CD8-positive, alpha-beta memory T cell (primary cell): ENCODE measurements at regions of chr20 and their contacts with region 1.

Region 1: GRCh38 chr20:17504898-17505635 is 26.1 kb downstream of the BFSP1 start:
- DNase-seq: peak; percentile 15 to 67 (median 54)
- H3K4me3 ChIP-seq: peak overlapping the region; percentile 59
- H3K4me3 Mint-ChIP-seq: peak overlapping the region; percentile 86 to 95 (median 92)
- H3K27ac ChIP-seq: peak overlapping the region; percentile 38
- H3K27ac Mint-ChIP-seq: peak overlapping the region; percentile 90 to 99 (median 95)
- H3K4me1 ChIP-seq: peaks cover 31% of the 10 kb centered on the region
- H3K4me1 Mint-ChIP-seq: peaks cover 41 to 43% (median 42%) of the 10 kb centered on the region in 3 donors
- H3K27me3 ChIP-seq: no peaks in the 10 kb centered on the region
- H3K27me3 Mint-ChIP-seq: peaks cover 0 to 6% of the 10 kb centered on the region in 2 donors

Region 2: DNA sequence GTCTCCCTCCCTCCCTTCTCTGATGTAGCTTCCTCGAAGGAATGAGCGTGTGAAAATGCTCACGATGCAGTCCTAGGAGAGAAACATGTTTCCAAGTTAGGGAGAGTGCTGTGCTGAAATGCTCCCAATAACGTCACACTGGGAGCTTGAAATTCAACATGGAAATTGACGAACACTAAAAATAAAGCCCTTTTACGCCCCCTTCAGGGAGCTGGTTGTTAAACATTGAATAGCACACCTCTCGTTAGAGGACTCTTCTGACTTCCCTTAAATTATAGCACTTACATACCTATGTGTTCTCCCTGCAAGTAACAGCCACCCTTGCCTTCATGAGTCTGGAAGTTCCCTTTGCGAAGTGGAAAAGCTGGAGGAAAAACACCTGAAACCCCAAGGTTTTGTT is 62.5 kb before region 1 on chr20:
- CTCF ChIA-PET with region 1: no interaction called
- POLR2A ChIA-PET with region 1: no interaction called
- DNase-seq: no peak
- H3K4me3 ChIP-seq: no peak overlapping the region
- H3K4me3 Mint-ChIP-seq: no peak overlapping the region
- H3K27ac ChIP-seq: no peak overlapping the region
- H3K27ac Mint-ChIP-seq: no peak overlapping the region
- H3K4me1 ChIP-seq: no peaks in the 10 kb centered on the region
- H3K4me1 Mint-ChIP-seq: no peaks in the 10 kb centered on the region
- H3K27me3 ChIP-seq: no peaks in the 10 kb centered on the region
- H3K27me3 Mint-ChIP-seq: peaks cover 20 to 29% of the 10 kb centered on the region in 2 donors

Region 3: DNA sequence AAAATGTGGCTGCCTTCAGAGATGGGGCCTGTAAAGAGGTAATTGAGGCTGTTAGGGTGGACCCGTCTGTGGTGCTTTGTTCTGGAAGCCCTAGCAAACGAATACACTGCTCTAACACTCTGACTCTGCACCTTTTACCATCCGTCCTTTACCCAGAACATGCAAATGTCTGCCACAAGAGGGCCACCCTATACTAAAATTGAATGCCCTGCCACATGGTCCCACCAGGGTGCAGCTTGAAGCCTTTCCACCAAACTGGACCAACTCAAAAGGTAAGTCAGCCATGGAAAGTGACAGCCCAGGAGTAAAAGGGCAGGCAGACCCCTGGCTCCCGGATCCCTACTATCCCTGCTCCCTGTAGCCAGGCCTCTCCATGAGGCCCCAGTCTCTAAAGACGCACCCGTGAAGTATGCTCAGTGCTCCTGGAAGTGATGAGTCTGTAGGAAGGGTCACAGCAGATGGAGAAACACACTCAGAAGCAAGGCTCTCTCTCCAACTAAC is 31.9 kb after region 1 on chr20:
- CTCF ChIA-PET with region 1: interaction called, 11 read pairs
- POLR2A ChIA-PET with region 1: interaction called, 3 read pairs
- DNase-seq: peak; percentile 43 to 75 (median 60)
- H3K4me3 ChIP-seq: no peak overlapping the region
- H3K4me3 Mint-ChIP-seq: no peak overlapping the region
- H3K27ac ChIP-seq: no peak overlapping the region
- H3K27ac Mint-ChIP-seq: peak overlapping the region in 2 of 8 donors; percentile 24 to 73
- H3K4me1 ChIP-seq: peaks cover 7% of the 10 kb centered on the region
- H3K4me1 Mint-ChIP-seq: peaks cover 6 to 13% (median 6%) of the 10 kb centered on the region in 3 donors
- H3K27me3 ChIP-seq: peaks cover 8% of the 10 kb centered on the region
- H3K27me3 Mint-ChIP-seq: peaks cover 15 to 37% of the 10 kb centered on the region in 2 donors

Region 4: DNA sequence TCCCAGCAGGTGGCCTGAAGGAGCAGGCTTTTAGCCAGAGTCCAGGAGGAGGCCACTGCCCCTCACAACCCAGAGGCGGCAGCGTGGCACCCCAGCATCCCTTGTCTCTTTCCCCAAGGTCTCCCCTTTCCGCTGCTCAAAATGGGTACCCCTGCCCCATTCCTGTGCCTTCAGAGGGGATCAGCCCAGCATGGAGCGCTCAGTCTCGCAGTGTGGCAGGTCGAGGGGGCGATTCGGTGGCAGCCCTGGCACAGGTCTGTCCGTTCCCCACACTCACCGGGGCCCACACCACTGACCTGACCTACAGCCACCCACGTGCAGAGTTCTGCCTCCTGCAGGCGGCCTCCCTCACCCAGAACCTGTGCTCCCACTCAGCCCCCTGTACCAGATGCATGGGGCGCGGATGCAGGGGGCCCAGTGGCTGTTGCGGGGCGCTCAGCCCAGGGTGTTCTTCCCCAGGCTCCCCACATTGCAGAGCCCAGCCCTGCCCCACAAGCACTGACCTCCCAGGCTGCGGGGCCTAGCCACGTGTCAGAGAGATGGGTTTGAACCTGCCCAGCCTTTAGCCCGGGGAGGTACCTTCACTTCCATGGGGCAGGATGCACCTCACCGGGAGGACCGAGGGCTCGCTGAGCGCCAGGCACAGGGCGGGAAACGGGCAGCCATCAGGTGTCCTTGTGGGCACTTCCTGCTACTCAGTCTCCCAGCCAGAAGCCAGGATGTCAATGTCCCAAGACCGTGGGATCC is 106.6 kb after region 1 on chr20:
- CTCF ChIA-PET with region 1: interaction called, 28 read pairs
- POLR2A ChIA-PET with region 1: interaction called, 5 read pairs
- DNase-seq: peak in 1 of 5 donors; percentile 33
- H3K4me3 ChIP-seq: peak overlapping the region; percentile 32
- H3K4me3 Mint-ChIP-seq: peak overlapping the region; percentile 7 to 82 (median 75)
- H3K27ac ChIP-seq: peak overlapping the region; percentile 46
- H3K27ac Mint-ChIP-seq: peak overlapping the region; percentile 87 to 99 (median 98)
- H3K4me1 ChIP-seq: peaks cover 42% of the 10 kb centered on the region
- H3K4me1 Mint-ChIP-seq: peaks cover 35 to 51% (median 36%) of the 10 kb centered on the region in 3 donors
- H3K27me3 ChIP-seq: no peaks in the 10 kb centered on the region
- H3K27me3 Mint-ChIP-seq: no peaks in the 10 kb centered on the region

Region 5: DNA sequence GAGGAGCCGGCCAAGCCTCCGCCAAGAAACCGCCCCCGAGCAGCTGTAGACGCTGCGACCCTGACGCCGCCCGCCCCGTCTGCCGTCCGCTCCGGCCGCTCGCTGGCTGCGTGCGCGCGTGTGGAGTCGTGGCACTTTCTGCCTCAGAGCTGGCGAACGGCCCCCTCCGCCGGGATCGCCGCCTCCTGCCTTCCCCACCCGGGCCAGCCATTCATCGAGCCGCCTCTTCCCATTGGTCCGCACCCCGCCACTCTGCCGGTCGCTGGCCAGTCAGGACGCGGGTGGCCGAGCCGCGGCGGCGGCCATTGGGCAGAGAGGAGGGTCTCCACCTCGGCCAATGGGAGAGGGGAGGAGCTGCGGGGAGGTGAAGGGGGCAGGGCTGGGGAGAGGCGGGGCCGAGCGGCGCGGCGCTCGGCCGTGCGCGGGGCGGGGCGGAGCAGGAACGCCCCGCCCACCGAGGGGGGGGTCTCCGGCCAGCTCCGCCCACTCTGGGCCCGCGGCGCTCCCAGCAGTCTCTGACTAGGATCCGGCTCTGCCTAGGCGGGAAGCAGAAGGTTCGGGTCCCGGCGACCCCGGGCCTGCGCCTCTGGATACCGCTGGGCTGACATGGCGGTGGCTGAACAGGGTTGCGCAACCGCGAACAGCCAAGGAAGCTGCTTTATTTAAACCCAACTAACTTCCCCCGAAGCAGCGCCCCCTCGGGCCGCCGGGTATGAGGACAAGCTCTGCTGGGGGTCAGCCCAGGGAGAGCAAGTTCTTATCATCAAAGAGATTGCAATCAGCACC is 177.2 kb after region 1 on chr20 and contains the start of gene RRBP1:
- CTCF ChIA-PET with region 1: interaction called, 14 read pairs
- POLR2A ChIA-PET with region 1: interaction called, 5 read pairs
- DNase-seq: peak; percentile 97 to 98 (median 98)
- H3K4me3 ChIP-seq: peak within 1 kb of the TSS; percentile 58
- H3K4me3 Mint-ChIP-seq: peak within 1 kb of the TSS; percentile 78 to 95 (median 88)
- H3K27ac ChIP-seq: peak within 1 kb of the TSS; percentile 52
- H3K27ac Mint-ChIP-seq: peak within 1 kb of the TSS; percentile 48 to 94 (median 82)
- H3K4me1 ChIP-seq: peaks cover 13% of the 10 kb centered on the region
- H3K4me1 Mint-ChIP-seq: peaks cover 18 to 29% (median 22%) of the 10 kb centered on the region in 3 donors
- H3K27me3 ChIP-seq: peaks cover 12% of the 10 kb centered on the region
- H3K27me3 Mint-ChIP-seq: peaks cover 11 to 35% of the 10 kb centered on the region in 2 donors
- total RNA-seq, gene RRBP1: 22.8 to 25.3 TPM

Region 6: GRCh38 chr20:17938871-17939619 is 434.0 kb after region 1 on chr20:
- CTCF ChIA-PET with region 1: interaction called, 11 read pairs
- POLR2A ChIA-PET with region 1: interaction called, 3 read pairs
- DNase-seq: peak; percentile 43 to 68 (median 47)
- H3K4me3 ChIP-seq: no peak overlapping the region
- H3K4me3 Mint-ChIP-seq: peak overlapping the region in 6 of 7 donors; percentile 11 to 65 (median 38)
- H3K27ac ChIP-seq: no peak overlapping the region
- H3K27ac Mint-ChIP-seq: peak overlapping the region in 7 of 8 donors; percentile 7 to 79 (median 25)
- H3K4me1 ChIP-seq: peaks cover 7% of the 10 kb centered on the region
- H3K4me1 Mint-ChIP-seq: peaks cover 7 to 18% (median 14%) of the 10 kb centered on the region in 3 donors
- H3K27me3 ChIP-seq: no peaks in the 10 kb centered on the region
- H3K27me3 Mint-ChIP-seq: no peaks in the 10 kb centered on the region

Region 7: GRCh38 chr20:17995967-17996819 is 491.1 kb after region 1 on chr20:
- CTCF ChIA-PET with region 1: interaction called, 25 read pairs
- POLR2A ChIA-PET with region 1: no interaction called
- DNase-seq: peak; percentile 3 to 59 (median 51)
- H3K4me3 ChIP-seq: no peak overlapping the region
- H3K4me3 Mint-ChIP-seq: no peak overlapping the region
- H3K27ac ChIP-seq: no peak overlapping the region
- H3K27ac Mint-ChIP-seq: peak overlapping the region in 2 of 8 donors; percentile 9 to 19
- H3K4me1 ChIP-seq: peaks cover 3% of the 10 kb centered on the region
- H3K4me1 Mint-ChIP-seq: peaks cover 5 to 7% (median 6%) of the 10 kb centered on the region in 3 donors
- H3K27me3 ChIP-seq: no peaks in the 10 kb centered on the region
- H3K27me3 Mint-ChIP-seq: no peaks in the 10 kb centered on the region